ENCODE measurements at regions of chr17 and their contacts with region 1.

Region 1: DNA sequence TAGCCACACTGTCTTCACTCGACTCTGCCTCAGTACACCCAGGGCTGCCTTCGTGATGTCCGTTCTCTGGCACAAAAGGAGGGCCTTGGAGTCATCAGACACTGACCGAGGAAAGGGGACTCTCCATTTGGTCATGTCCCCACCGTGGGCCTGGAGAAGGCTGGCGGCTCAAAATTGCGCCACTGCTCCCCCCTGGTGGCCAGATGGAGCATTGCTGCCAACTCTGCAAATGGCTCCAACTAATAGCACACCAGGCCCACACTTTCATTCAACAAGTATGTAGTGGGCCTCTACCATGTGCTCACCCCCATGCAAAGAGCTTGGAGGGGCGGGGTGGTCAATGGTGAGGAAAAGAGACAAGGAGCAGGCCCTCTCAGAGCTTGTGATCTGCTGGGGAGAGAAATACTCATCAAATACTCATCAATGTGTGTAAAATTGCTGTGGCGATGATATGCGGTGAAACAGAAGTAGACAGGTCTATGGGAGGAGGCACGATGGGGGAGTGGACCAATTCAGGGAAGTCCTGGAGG is 5.2 kb upstream of the GRIN2C start:
- DNase-seq: peak in 4 of 5 donors; percentile 74 to 88 (median 84)
- H3K4me3 ChIP-seq: no peak overlapping the region
- H3K27ac ChIP-seq: no peak overlapping the region
- H3K4me1 ChIP-seq: peaks cover 0 to 5% (median 2%) of the 10 kb centered on the region in 3 donors
- H3K27me3 ChIP-seq: peaks cover 3% of the 10 kb centered on the region
- CTCF ChIP-seq: peak; percentile 98

Region 2: DNA sequence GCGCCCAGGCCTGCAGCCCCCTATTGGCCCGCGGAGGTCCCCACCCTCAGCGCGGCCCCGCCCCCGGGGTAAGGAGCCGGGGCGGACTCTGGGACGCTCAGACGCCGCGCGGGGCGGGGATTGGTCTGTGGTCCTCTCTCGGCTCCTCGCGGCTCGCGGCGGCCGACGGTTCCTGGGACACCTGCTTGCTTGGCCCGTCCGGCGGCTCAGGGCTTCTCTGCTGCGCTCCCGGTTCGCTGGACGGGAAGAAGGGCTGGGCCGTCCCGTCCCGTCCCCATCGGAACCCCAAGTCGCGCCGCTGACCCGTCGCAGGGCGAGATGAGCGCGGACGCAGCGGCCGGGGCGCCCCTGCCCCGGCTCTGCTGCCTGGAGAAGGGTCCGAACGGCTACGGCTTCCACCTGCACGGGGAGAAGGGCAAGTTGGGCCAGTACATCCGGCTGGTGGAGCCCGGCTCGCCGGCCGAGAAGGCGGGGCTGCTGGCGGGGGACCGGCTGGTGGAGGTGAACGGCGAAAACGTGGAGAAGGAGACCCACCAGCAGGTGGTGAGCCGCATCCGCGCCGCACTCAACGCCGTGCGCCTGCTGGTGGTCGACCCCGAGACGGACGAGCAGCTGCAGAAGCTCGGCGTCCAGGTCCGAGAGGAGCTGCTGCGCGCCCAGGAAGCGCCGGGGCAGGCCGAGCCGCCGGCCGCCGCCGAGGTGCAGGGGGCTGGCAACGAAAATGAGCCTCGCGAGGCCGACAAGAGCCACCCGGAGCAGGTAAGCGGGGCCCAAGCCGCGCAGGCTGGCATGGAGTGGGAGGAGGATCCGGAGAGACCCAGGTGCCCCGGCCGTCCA is 116.2 kb before region 1 on chr17 and contains the start of gene NHERF1:
- intact Hi-C with region 1: loop called (anchors 10 kb)
- DNase-seq: peak; percentile 94 to 98 (median 97)
- H3K4me3 ChIP-seq: peak within 1 kb of the TSS; percentile 42 to 84 (median 75)
- H3K27ac ChIP-seq: peak within 1 kb of the TSS; percentile 82 to 91
- H3K4me1 ChIP-seq: peaks cover 3 to 43% (median 10%) of the 10 kb centered on the region in 3 donors
- H3K27me3 ChIP-seq: no peaks in the 10 kb centered on the region
- CTCF ChIP-seq: peak; percentile 6
- total RNA-seq, gene NHERF1: 71.3 TPM

Region 3: GRCh38 chr17:74790161-74791054 is 74.5 kb before region 1 on chr17:
- intact Hi-C with region 1: loop called (anchors 5 kb)
- DNase-seq: no peak
- H3K4me3 ChIP-seq: no peak overlapping the region
- H3K27ac ChIP-seq: no peak overlapping the region
- H3K4me1 ChIP-seq: no peaks in the 10 kb centered on the region
- H3K27me3 ChIP-seq: no peaks in the 10 kb centered on the region
- CTCF ChIP-seq: no peak

Measured in kidney (tissue), 22 donors.